ENCODE measurements at regions of chr10 and their contacts with region 1.

Region 1: DNA sequence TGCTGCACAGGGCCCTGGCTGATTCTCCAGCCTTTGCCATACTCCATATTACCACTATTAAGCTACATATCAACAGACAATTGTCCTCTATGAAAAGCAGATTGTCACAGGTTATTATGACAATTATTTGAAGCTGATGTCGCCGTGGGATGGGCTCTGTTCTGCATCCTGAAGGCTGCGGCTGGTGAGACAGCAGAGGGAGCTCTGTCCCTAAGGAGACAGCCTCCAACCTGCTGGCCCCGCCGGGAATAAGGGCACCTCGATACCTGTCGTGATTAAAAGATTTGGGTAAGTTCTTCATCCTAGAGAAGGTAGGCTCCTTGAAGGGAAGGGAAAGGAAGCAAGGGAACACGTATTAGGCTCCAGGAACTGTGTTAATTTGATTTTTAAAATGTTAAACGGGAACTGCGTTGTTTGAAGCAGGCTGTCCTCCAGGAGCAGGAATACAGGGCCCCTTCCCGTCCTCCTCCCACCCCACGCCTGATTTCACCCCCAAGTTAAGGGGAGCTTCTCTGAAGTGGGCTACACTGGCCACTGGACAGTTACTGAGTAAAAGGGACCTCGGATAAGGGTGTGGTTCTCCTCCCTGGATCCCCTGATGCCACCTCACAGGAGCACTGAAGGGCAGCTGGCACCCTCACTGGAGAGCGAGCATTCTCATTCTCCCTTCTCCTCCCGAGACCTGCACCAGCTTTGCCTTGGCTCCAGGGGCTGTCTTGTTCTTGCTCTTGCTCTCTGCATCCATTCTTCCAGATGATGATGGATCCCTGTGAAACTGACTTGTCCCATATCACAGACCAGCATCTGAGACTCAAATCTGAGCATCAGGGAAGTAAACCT is 11.8 kb upstream of the TIAL1 start:
- DNase-seq: peak in 4 of 5 donors; percentile 19 to 28 (median 22)
- H3K4me3 ChIP-seq: no peak overlapping the region
- H3K4me3 Mint-ChIP-seq: peak overlapping the region in 4 of 8 donors; percentile 25 to 40 (median 30)
- H3K27ac ChIP-seq: no peak overlapping the region
- H3K27ac Mint-ChIP-seq: peak overlapping the region in 1 of 7 donors; percentile 27
- H3K4me1 ChIP-seq: no peaks in the 10 kb centered on the region
- H3K4me1 Mint-ChIP-seq: peaks cover 4 to 8% (median 6%) of the 10 kb centered on the region in 4 donors
- H3K27me3 ChIP-seq: no peaks in the 10 kb centered on the region
- H3K27me3 Mint-ChIP-seq: peaks cover 0 to 2% of the 10 kb centered on the region in 2 donors

Region 2: GRCh38 chr10:119859420-119860258 is 251.1 kb after region 1 on chr10:
- CTCF ChIA-PET with region 1: interaction called, 27 read pairs
- POLR2A ChIA-PET with region 1: no interaction called
- intact Hi-C with region 1: loop called (anchors 1 kb)
- DNase-seq: peak in 4 of 5 donors; percentile 45 to 52 (median 50)
- H3K4me3 ChIP-seq: no peak overlapping the region
- H3K4me3 Mint-ChIP-seq: no peak overlapping the region
- H3K27ac ChIP-seq: no peak overlapping the region
- H3K27ac Mint-ChIP-seq: peak overlapping the region in 6 of 7 donors; percentile 12 to 74 (median 24)
- H3K4me1 ChIP-seq: peaks cover 36% of the 10 kb centered on the region
- H3K4me1 Mint-ChIP-seq: peaks cover 26 to 50% (median 39%) of the 10 kb centered on the region in 4 donors
- H3K27me3 ChIP-seq: no peaks in the 10 kb centered on the region
- H3K27me3 Mint-ChIP-seq: no peaks in the 10 kb centered on the region

Region 3: GRCh38 chr10:120810298-120810697 is 1201.8 kb after region 1 on chr10:
- CTCF ChIA-PET with region 1: no interaction called
- POLR2A ChIA-PET with region 1: no interaction called
- intact Hi-C with region 1: no loop called
- DNase-seq: no peak
- H3K4me3 ChIP-seq: no peak overlapping the region
- H3K4me3 Mint-ChIP-seq: no peak overlapping the region
- H3K27ac ChIP-seq: no peak overlapping the region
- H3K27ac Mint-ChIP-seq: no peak overlapping the region
- H3K4me1 ChIP-seq: no peaks in the 10 kb centered on the region
- H3K4me1 Mint-ChIP-seq: no peaks in the 10 kb centered on the region
- H3K27me3 ChIP-seq: no peaks in the 10 kb centered on the region
- H3K27me3 Mint-ChIP-seq: peaks cover 8 to 10% of the 10 kb centered on the region in 2 donors

Measured in CD4-positive, alpha-beta memory T cell (primary cell).